Spleen (tissue), 13 donors: ENCODE measurements at regions of chr1 and their contacts with region 1.

Region 1: GRCh38 chr1:236748471-236748870 is 46.6 kb upstream of the MTR start:
- DNase-seq: no peak
- H3K4me3 ChIP-seq: no peak overlapping the region
- H3K27ac ChIP-seq: no peak overlapping the region
- H3K4me1 ChIP-seq: no peaks in the 10 kb centered on the region
- H3K27me3 ChIP-seq: peaks cover 0 to 15% (median 0%) of the 10 kb centered on the region in 7 donors
- CTCF ChIP-seq: peak in 1 of 11 experiments; percentile 19
- POLR2A ChIP-seq: no peak

Region 2: GRCh38 chr1:236854602-236854978 is 106.1 kb after region 1 on chr1:
- intact Hi-C with region 1: no loop called
- DNase-seq: no peak
- H3K4me3 ChIP-seq: no peak overlapping the region
- H3K27ac ChIP-seq: peak overlapping the region in 5 of 8 donors; percentile 44 to 70 (median 60)
- H3K4me1 ChIP-seq: peaks cover 0 to 10% (median 0%) of the 10 kb centered on the region in 6 donors
- H3K27me3 ChIP-seq: no peaks in the 10 kb centered on the region
- CTCF ChIP-seq: no peak
- POLR2A ChIP-seq: no peak

Region 3: GRCh38 chr1:236938760-236939159 is 190.3 kb after region 1 on chr1:
- intact Hi-C with region 1: no loop called
- DNase-seq: no peak
- H3K4me3 ChIP-seq: no peak overlapping the region
- H3K27ac ChIP-seq: no peak overlapping the region
- H3K4me1 ChIP-seq: no peaks in the 10 kb centered on the region
- H3K27me3 ChIP-seq: no peaks in the 10 kb centered on the region
- CTCF ChIP-seq: no peak
- POLR2A ChIP-seq: no peak

Region 4: GRCh38 chr1:237542525-237543418 is 794.3 kb after region 1 on chr1:
- intact Hi-C with region 1: loop called (anchors 10 kb)
- DNase-seq: no peak
- H3K4me3 ChIP-seq: no peak overlapping the region
- H3K27ac ChIP-seq: no peak overlapping the region
- H3K4me1 ChIP-seq: no peaks in the 10 kb centered on the region
- H3K27me3 ChIP-seq: no peaks in the 10 kb centered on the region
- CTCF ChIP-seq: no peak
- POLR2A ChIP-seq: no peak